ENCODE measurements at regions of chr3 and their contacts with region 1.

Region 1: DNA sequence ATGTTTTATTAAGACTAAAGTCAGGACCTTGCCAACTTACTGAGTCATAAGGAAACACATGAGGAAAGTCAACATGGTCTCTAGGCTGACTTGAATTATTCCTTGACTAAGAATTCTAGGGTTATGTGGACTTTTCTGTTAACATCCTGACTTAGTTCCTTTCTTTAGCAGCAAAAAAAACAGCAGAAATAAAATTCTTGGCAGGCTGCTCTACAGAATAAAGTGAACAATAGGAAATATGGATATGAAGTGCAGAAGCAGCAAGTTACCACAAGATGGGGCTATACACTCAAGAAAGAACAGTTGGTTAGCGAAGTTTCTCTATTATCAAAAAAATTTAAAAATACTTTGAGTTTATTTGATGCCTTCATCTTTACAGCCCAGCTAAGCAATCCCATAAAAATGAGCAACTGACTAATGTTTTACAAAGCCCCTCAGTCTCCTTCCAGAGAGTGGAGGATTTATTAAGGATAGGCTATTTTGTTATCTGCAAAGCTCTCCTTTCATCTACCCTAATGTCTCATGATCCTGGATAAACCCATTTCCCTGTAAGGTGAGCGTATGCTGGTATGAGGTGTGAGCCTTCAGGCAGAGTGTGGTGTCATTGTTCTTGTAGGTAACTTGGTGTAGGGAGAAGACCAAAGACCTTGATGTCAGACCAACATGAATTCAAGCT is 23.1 kb upstream of the MCCC1 start:
- DNase-seq: no peak
- H3K4me3 Mint-ChIP-seq: no peak overlapping the region
- H3K27ac Mint-ChIP-seq: no peak overlapping the region
- H3K4me1 Mint-ChIP-seq: peaks cover 12% of the 10 kb centered on the region
- H3K27me3 Mint-ChIP-seq: peaks cover 6% of the 10 kb centered on the region

Region 2: DNA sequence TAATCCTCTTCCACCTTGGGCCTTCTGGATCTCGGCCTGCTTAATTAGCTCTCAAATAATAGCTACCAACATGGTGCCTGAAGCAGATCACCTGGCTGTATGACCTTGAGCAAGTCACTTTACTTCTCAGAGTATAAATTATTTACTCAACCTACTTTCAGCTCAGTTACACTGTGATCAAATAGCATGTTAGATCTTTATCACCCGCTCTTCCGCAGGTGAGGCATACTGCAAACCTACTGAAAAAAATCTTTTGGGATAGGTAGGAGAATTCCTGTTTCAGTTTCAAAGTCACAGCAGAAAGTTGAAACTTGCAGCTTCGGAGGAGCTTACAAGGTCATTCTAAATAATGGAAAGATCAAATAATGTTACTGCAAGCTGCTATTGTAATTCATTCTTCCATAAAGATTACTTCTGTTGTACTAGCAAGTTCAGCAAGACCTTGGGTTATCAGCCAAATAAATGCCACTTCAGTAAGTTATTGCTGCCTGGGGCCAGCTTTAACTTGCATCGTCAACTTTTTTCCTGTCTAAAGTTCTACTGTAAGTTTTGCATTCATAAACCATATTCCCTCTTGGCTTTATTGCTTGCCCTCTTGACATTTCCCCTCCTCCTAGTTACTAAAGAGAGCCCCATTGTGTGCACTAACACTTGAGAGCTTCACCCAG is 597.5 kb before region 1 on chr3:
- intact Hi-C with region 1: no loop called
- DNase-seq: no peak
- H3K4me3 Mint-ChIP-seq: no peak overlapping the region
- H3K27ac Mint-ChIP-seq: no peak overlapping the region
- H3K4me1 Mint-ChIP-seq: no peaks in the 10 kb centered on the region
- H3K27me3 Mint-ChIP-seq: no peaks in the 10 kb centered on the region

Region 3: DNA sequence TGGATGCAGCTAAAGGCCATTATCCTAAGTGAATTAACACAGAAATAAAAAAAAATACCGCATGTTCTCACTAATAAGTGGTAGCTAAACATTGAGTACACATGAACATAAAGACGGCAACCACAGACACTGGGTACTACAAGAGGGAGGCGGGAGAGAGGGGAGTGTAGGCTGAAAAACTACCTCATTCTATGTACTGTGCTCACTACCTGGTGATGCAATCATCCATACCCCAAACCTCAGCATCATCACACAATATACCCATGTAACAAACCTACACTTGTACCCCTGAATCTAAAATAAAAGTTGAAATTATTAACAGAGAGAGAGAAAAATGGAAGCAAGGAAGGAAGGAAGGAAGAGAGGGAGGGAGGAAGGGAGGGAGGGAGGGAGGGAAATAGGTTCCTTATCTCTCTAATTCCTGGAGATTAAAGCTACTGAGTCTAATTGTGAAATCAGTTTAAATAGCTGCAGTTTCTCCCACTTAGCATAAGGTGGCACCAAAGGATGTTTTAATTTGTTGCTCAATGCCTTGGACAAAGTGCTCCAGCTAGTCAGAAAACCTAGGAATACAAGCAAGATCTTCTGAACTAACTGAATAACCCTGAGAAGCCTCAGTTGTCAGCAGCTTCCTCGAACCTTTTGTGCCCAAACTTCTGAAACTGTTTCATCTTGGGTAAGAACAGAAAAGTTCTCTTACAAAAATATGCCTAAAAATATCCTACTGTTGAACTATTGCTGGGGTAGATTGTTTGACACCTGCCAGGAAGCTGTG is 408.5 kb before region 1 on chr3:
- intact Hi-C with region 1: loop called (anchors 2 kb)
- DNase-seq: no peak
- H3K4me3 Mint-ChIP-seq: no peak overlapping the region
- H3K27ac Mint-ChIP-seq: no peak overlapping the region
- H3K4me1 Mint-ChIP-seq: peaks cover 19% of the 10 kb centered on the region
- H3K27me3 Mint-ChIP-seq: peaks cover 9% of the 10 kb centered on the region

Region 4: DNA sequence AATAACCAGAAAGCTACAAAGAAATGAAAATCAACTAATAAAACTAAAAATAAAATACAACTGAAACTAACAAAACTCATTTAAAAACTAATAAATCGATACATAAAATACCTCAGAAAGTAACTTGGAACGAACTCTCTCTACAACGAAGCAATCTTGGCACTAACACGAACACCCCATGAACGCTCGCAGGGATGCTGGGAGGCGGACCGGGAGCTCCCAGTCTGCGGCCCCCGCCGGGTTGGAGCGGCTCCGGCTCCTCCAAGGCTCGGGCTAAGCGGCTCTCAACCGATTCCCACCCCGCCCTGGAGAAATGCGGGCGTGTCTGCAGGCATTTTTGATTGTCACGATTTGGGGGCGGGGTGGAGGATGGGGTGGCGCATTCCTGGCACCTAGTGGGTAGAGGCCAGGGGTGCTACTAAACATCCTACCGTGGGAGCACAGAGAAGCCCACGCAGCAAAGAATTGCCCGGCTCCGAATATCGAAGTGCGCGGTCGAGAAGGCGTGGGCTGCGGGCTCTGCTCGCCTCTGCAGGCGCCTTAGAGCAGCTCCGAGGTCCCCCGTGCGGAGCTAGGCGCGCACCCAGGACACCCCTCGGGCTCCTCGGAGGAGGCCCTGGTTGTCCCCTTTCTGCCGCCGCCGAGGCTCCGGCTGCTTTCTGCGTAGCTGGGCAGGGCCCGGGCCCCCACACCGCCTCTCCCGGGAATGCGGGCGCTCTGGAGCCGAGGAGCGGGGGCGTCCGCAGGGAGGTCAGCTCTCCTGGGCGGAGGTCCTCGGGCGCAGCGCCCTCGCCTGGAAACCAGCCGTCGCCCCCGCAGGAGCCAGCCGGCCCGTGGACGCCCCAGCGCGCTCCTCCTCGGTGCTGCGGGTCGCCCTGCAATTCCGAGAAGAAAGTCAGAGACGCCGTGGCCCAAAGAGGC is 56.5 kb after region 1 on chr3:
- intact Hi-C with region 1: loop called (anchors 1 kb)
- DNase-seq: peak; percentile 17
- H3K4me3 Mint-ChIP-seq: peak overlapping the region; percentile 79
- H3K27ac Mint-ChIP-seq: peak overlapping the region; percentile 18
- H3K4me1 Mint-ChIP-seq: peaks cover 17% of the 10 kb centered on the region
- H3K27me3 Mint-ChIP-seq: peaks cover 36% of the 10 kb centered on the region

Region 5: GRCh38 chr3:183377307-183377959 is 255.0 kb after region 1 on chr3:
- intact Hi-C with region 1: loop called (anchors 1 kb)
- DNase-seq: no peak
- H3K4me3 Mint-ChIP-seq: no peak overlapping the region
- H3K27ac Mint-ChIP-seq: no peak overlapping the region
- H3K4me1 Mint-ChIP-seq: peaks cover 36% of the 10 kb centered on the region
- H3K27me3 Mint-ChIP-seq: no peaks in the 10 kb centered on the region

Region 6: DNA sequence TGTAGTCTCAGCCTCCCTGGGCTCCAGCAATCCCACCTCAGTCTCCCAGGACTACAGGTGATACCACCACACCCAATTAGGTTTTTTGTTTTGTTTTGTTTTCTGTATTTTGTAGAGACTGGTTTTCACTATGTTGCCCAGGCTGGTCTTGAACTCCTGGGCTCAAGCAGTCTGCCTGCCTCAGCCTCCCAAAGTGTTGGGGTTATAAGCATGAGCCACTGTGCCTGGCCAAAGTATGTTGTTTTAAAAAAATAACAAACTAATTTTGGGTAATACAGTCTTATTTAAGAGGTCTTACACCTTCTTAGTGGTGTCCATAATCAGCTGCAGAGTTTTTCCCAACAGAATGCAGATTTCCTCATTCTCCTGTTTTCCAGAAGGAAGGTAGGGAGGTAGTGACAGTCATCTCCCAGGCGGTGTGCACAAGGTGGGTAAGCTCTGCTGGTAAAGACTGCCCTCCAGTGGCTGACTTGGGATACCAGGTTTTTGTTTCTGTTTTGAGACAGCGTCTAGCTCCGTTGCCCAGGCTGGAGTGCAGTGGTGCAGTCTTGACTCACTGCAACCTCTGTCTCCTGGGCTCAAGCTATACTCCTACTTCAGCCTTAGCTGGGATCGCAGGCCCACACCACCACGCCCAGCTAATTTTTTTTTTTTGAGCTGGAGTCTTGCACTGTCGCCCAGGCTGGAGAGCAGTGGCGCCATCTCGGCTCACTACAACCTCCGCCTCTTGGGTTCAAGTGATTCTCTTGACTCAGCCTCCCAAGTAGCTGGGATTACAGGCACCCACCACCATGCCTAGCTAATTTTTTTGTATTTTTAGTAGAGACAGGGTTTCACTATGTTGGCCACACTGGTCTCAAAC is 644.6 kb after region 1 on chr3:
- intact Hi-C with region 1: loop called (anchors 1 kb)
- DNase-seq: peak; percentile 63
- H3K4me3 Mint-ChIP-seq: no peak overlapping the region
- H3K27ac Mint-ChIP-seq: no peak overlapping the region
- H3K4me1 Mint-ChIP-seq: peaks cover 7% of the 10 kb centered on the region
- H3K27me3 Mint-ChIP-seq: no peaks in the 10 kb centered on the region